ENCODE measurements at regions of chr15 and their contacts with region 1.

Region 1: DNA sequence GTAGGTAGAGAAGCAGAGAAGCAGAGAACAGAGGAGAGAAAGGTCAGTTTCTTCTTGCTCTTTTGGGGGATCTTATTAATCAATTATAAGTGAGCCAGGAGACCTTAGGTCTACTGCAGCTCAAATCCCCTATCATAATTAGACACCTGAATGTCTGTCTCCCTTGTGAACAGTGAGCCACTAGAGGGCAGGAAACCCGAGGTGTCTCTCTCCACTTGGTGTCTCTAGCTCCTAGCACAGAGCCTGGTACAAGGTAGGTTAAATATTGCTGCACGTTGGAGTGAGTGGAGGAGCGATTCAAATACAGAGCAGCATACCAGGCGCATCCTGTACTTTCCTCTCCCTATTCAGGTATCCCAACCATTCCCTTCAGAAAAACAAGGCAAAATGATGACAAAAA is 2.0 kb upstream of the ST8SIA2 start:
- DNase-seq: peak; percentile 36
- ATAC-seq: peak; percentile 95
- H3K4me3 ChIP-seq: no peak overlapping the region
- H3K27ac ChIP-seq: no peak overlapping the region
- H3K4me1 ChIP-seq: no peaks in the 10 kb centered on the region
- H3K27me3 ChIP-seq: peaks cover 47% of the 10 kb centered on the region; the same call in 1 of the 2 replicates
- CTCF ChIP-seq: peak; percentile 68 to 80 (median 71)
- POLR2A ChIP-seq: no peak
- RAD21 ChIP-seq: peak; percentile 62

Region 2: DNA sequence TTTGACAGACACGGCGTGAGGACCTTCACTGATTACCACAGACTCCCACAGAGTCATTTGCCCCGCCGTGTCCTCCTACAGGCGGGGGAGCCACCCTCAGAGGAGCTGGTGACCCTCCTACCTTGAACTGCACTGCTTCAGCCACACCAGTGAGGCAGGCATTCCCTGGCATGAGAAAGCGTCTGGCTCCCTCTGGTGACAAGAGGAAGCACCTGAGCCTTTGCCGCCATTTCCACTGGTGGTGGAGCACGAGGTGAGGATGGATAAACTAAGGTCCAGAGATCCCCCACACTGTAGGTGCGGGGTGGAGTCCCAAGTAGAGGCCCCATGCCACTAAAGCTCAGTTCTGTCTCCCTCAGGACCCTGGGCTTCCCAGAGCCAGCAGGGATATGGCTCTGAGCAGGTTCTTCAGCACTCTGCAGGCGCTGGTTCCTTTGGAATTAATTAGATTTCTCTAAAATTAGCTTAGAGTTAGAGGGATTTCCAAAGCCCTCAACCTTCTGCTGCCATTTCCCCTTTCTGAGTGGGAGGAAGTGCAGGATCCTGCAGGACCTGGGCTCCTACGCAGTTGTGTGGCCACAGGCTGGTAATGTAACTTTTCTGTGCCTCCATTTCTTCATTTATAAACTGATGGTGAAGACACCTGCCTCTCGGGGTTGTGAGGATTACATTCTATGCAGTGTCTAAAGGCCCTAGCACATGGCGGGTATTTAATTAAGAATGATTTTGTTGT is 314.1 kb before region 1 on chr15:
- CTCF ChIA-PET with region 1: no interaction called
- POLR2A ChIA-PET with region 1: no interaction called
- RAD21 ChIA-PET with region 1: no interaction called
- intact Hi-C with region 1: no loop called
- DNase-seq: peak; percentile 54
- ATAC-seq: peak; percentile 86
- H3K4me3 ChIP-seq: no peak overlapping the region
- H3K27ac ChIP-seq: no peak overlapping the region
- H3K4me1 ChIP-seq: no peaks in the 10 kb centered on the region; a peak in 1 of 4 replicates
- H3K27me3 ChIP-seq: no peaks in the 10 kb centered on the region
- CTCF ChIP-seq: peak; percentile 71 to 86 (median 76)
- POLR2A ChIP-seq: no peak
- RAD21 ChIP-seq: peak; percentile 96

Region 3: GRCh38 chr15:92405942-92406341 is 14.3 kb after region 1 on chr15:
- CTCF ChIA-PET with region 1: interaction called, 11 read pairs
- POLR2A ChIA-PET with region 1: no interaction called
- RAD21 ChIA-PET with region 1: no interaction called
- intact Hi-C with region 1: no loop called
- DNase-seq: no peak
- ATAC-seq: no peak
- H3K4me3 ChIP-seq: no peak overlapping the region
- H3K27ac ChIP-seq: no peak overlapping the region
- H3K4me1 ChIP-seq: no peaks in the 10 kb centered on the region
- H3K27me3 ChIP-seq: peaks cover 35% of the 10 kb centered on the region
- CTCF ChIP-seq: no peak
- POLR2A ChIP-seq: no peak
- RAD21 ChIP-seq: no peak